ENCODE measurements at regions of chr22 and their contacts with region 1.

Region 1: DNA sequence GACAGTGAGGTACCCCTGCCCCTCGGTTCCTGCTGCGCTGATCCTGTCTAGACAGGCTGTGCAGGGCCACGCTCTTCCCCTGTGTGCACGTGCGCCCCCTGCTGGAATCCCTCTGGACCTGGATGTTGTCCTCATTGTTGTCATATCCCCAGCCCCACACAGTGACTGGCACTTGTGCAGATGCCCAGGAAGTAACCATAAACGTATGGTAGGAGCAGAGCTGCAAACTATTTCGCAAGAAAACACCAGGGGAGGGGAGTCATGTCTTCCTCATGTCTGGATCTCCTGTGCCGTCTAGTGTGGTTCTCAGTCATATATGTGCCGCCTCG is 114.7 kb downstream of the CRYBB2 start:
- DNase-seq: peak; percentile 59
- H3K4me3 Mint-ChIP-seq: no peak overlapping the region
- H3K27ac Mint-ChIP-seq: no peak overlapping the region
- H3K4me1 Mint-ChIP-seq: no peaks in the 10 kb centered on the region
- H3K27me3 Mint-ChIP-seq: no peaks in the 10 kb centered on the region
- CTCF ChIP-seq: peak; percentile 36

Region 2: GRCh38 chr22:25235547-25236290 is 98.4 kb before region 1 on chr22:
- CTCF ChIA-PET with region 1: interaction called, 4 read pairs
- POLR2A ChIA-PET with region 1: no interaction called
- intact Hi-C with region 1: loop called (anchors 10 kb)
- DNase-seq: peak; percentile 80
- H3K4me3 Mint-ChIP-seq: no peak overlapping the region
- H3K27ac Mint-ChIP-seq: no peak overlapping the region
- H3K4me1 Mint-ChIP-seq: peaks cover 7% of the 10 kb centered on the region
- H3K27me3 Mint-ChIP-seq: peaks cover 8% of the 10 kb centered on the region
- CTCF ChIP-seq: peak; percentile 86

Measured in MCF 10A (cell line).